Prostate gland (tissue), 2 donors: ENCODE measurements at regions of chr21 and their contacts with region 1.

Region 1: DNA sequence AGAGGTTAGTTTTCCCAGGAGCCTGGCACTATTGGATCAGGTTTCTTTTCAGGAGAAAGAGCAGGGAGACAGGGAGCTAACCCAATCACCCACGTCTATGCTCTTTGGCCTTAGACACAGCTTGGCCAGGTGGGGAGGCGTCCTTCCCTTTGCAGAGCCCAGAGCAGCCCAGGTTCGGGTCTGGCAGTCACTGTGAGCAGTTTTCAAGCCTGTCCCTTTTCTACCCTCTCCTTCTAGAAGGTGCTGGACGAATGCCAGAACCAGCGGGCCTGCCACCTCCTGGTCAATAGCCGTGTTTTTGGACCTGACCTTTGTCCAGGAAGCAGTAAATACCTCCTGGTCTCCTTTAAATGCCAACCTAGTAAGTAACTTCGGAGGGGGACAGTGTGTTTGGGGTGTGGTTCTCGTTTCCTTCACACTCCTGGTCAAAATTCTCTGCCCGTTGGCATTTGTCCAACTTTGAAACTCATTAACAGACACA is 44.9 kb downstream of the EVA1C start:
- DNase-seq: no peak
- H3K4me3 ChIP-seq: no peak overlapping the region
- H3K27ac ChIP-seq: peak overlapping the region; percentile 82 to 88
- H3K4me1 ChIP-seq: no peaks in the 10 kb centered on the region
- H3K27me3 ChIP-seq: no peaks in the 10 kb centered on the region
- CTCF ChIP-seq: peak in 1 of 4 experiments; percentile 21
- POLR2A ChIP-seq: no peak

Region 2: DNA sequence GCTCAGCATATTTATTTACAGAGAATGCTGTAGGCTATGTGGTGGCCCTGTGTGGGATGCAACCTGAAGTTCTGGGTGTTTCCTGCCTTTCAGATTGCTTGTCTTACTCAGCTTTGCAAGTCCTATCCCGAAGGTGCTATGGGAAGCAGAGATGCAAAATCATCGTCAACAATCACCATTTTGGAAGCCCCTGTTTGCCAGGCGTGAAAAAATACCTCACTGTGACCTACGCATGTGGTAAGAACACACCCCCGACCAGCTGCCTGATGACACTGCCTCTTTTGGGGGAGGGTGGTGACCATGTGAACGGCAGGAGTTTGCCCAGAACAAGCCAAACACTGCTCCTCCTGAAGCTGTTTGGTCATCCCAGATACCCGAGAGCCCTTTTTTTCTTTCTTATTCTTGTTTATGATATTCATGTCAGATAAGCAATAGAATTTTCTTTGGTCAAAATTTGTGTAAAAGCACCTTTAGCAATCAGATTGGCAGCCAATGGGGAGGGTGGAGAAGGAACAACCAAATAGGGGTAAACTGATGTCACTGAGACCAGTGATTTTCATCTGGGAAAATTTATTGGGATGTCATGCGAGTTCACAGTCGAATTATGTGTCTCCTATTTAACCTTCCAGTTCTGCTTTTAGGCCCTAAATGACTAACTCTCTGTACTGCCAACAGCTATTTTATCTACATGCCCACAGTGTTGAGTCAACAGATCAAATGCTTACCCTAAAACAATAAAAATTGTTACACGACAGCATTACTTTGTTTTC is 37.7 kb after region 1 on chr21:
- intact Hi-C with region 1: loop called (anchors 5 kb)
- DNase-seq: peak; percentile 58
- H3K4me3 ChIP-seq: no peak overlapping the region
- H3K27ac ChIP-seq: peak overlapping the region; percentile 77 to 90
- H3K4me1 ChIP-seq: peaks cover 14% of the 10 kb centered on the region
- H3K27me3 ChIP-seq: no peaks in the 10 kb centered on the region
- CTCF ChIP-seq: no peak
- POLR2A ChIP-seq: no peak

Region 3: GRCh38 chr21:32520875-32521735 is 63.7 kb after region 1 on chr21:
- intact Hi-C with region 1: no loop called
- DNase-seq: peak; percentile 65
- H3K4me3 ChIP-seq: no peak overlapping the region
- H3K27ac ChIP-seq: peak overlapping the region; percentile 44 to 55
- H3K4me1 ChIP-seq: peaks cover 3% of the 10 kb centered on the region
- H3K27me3 ChIP-seq: no peaks in the 10 kb centered on the region
- CTCF ChIP-seq: no peak
- POLR2A ChIP-seq: no peak